AG04450 (cell line): ENCODE measurements at regions of chr6 and their contacts with region 1.

Region 1: DNA sequence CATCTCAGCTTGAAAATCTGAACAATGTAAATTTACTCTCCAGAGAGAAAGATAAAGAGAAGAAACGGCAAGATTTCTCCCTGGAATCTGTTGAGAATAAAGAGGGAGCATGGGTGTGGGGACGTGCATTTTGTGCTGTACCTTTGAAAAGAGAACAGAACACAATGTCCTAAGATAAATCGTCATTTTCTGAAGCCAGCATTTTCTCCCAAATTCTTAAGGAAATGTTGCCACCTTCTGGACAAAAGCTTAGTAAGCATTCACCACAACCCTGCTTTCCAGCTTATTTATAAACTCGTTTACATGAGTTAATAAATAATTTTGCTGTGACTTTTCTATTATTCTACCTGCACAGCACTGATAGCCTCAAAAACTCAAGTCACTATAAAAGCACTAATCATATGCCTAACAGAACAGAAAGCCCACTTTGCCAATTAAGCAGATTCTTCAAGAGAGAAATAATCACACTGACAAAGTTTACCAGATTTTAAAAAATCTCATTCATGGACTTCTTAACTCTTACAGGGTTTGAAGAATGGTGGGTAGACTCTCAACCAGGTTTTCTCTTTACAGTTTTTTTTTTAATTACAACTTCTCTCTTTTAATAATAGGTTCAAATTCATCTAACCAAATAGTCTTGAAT is 155.8 kb downstream of the MBOAT1 start:
- DNase-seq: peak; percentile 20
- H3K4me3 ChIP-seq: no peak overlapping the region
- H3K27ac ChIP-seq: no peak overlapping the region
- H3K27me3 ChIP-seq: no peaks in the 10 kb centered on the region
- CTCF ChIP-seq: peak; percentile 63

Region 2: GRCh38 chr6:18595774-18596530 is 1460.5 kb before region 1 on chr6:
- CTCF ChIA-PET with region 1: interaction called, 13 read pairs
- POLR2A ChIA-PET with region 1: no interaction called
- DNase-seq: peak; percentile 36
- H3K4me3 ChIP-seq: no peak overlapping the region
- H3K27ac ChIP-seq: no peak overlapping the region
- H3K27me3 ChIP-seq: no peaks in the 10 kb centered on the region
- CTCF ChIP-seq: peak; percentile 99

Region 3: DNA sequence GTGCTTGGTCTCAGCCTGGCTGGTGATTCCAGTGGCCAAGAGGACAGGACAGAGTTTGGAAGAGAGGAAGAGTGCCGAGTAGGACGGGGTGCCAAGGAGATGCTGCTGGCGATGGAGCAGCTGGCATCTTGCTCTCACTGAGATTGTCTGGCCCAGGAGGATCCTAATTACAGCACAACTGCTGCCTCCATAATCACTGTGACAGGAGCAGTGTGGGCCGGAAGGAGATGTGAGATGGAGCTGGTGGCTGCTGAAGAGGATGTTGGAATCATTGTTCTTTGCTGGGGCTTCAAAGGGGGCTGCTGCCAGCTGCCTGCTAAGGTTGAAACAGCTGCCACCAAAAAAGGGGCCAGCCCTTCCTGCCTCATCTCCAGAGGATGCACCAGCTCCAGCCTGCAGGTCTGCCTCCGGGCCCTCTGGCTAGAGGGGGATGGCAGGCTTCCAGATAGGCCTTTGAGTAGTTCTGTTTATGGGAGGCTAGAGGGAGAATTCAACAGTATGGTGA is 1454.9 kb before region 1 on chr6:
- CTCF ChIA-PET with region 1: interaction called, 13 read pairs
- POLR2A ChIA-PET with region 1: no interaction called
- DNase-seq: no peak
- H3K4me3 ChIP-seq: no peak overlapping the region
- H3K27ac ChIP-seq: no peak overlapping the region
- H3K27me3 ChIP-seq: peaks cover 2% of the 10 kb centered on the region
- CTCF ChIP-seq: no peak

Region 4: DNA sequence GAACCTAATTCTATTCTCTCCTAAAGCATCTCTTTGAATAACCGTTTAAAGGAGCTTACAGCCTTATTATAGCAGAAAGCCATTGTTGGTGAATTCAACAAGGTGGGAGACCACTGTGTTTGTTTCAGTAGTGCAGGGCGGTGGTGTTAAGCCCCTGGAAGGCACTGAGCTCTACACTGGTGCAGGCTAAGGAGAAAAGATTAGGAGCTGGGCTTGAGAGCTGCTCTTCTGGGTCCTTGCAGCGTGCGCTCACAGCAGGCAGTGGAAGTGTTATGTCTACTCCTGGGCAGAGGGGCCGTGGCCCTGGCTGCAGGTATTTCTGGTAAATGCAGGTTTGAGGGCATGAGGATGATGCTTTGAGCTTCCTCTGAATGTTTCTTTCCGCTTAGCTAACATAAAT is 1308.2 kb before region 1 on chr6:
- CTCF ChIA-PET with region 1: interaction called, 26 read pairs
- POLR2A ChIA-PET with region 1: no interaction called
- DNase-seq: no peak
- H3K4me3 ChIP-seq: no peak overlapping the region
- H3K27ac ChIP-seq: no peak overlapping the region
- H3K27me3 ChIP-seq: no peaks in the 10 kb centered on the region
- CTCF ChIP-seq: no peak

Region 5: GRCh38 chr6:18997375-18997826 is 1059.1 kb before region 1 on chr6:
- CTCF ChIA-PET with region 1: interaction called, 12 read pairs
- POLR2A ChIA-PET with region 1: no interaction called
- DNase-seq: no peak
- H3K4me3 ChIP-seq: no peak overlapping the region
- H3K27ac ChIP-seq: no peak overlapping the region
- H3K27me3 ChIP-seq: no peaks in the 10 kb centered on the region
- CTCF ChIP-seq: peak; percentile 75

Region 6: GRCh38 chr6:20238688-20239587 is 182.5 kb after region 1 on chr6:
- CTCF ChIA-PET with region 1: no interaction called
- POLR2A ChIA-PET with region 1: no interaction called
- DNase-seq: no peak
- H3K4me3 ChIP-seq: no peak overlapping the region
- H3K27ac ChIP-seq: no peak overlapping the region
- H3K27me3 ChIP-seq: no peaks in the 10 kb centered on the region
- CTCF ChIP-seq: no peak